Ascending aorta (tissue), 2 donors: ENCODE measurements at regions of chr7 and their contacts with region 1.

Region 1: DNA sequence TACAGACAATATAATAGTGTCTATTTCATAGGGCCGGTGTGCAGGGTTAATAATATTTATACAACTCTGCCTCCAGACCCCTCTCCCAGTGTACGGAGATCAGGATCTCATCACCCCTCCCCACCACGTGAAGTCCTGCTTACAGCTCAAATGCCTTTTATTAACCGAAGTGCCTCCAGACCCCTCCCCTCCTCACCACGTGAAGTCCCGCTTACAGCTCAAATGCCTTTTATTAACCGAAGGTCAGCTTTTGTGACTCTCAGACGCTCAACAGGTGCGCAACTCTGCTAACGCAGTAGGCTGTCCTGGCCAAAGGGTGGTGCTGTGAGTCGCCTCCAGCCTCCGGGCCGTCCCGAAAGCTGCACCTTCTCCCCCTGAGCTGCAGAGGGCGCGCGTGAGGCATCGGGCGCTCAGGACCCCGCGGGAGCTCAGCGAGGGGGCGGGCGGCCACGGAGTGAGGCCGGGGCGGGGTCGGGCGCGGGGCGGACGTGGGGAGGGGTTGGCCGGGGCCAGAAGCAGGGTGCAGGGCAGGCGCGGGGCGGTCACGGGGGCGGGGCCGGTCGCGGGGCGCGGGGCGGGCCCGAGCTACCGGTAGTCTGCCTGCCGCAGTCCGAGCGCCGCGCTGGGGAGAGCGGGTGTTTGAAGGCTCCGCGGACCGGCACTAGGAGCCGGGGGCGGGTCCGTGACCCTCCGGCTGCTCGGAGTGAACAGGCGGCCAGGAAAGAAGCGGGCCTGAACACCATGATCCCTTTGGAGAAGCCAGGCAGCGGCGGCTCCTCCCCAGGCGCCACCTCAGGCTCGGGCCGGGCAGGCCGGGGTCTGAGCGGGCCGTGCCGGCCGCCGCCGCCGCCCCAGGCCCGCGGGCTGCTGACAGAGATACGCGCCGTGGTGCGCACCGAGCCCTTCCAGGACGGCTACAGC is at the start of gene STK17A:
- DNase-seq: peak; percentile 74 to 96
- H3K4me3 ChIP-seq: peak within 1 kb of the TSS; percentile 83 to 89
- H3K27ac ChIP-seq: peak within 1 kb of the TSS; percentile 92 to 98
- H3K4me1 ChIP-seq: peaks cover 0 to 10% of the 10 kb centered on the region in 2 donors
- H3K27me3 ChIP-seq: no peaks in the 10 kb centered on the region
- CTCF ChIP-seq: peak; percentile 100
- total RNA-seq, gene STK17A: 9.6 TPM

Region 2: GRCh38 chr7:42931834-42932651 is 650.7 kb before region 1 on chr7 and contains the starts of genes MRPL32 and PSMA2:
- intact Hi-C with region 1: loop called (anchors 10 kb)
- DNase-seq: peak; percentile 87 to 98
- H3K4me3 ChIP-seq: peak within 1 kb of the TSS; percentile 89 to 94
- H3K27ac ChIP-seq: peak within 1 kb of the TSS; percentile 78 to 87
- H3K4me1 ChIP-seq: peaks cover 4 to 25% of the 10 kb centered on the region in 2 donors
- H3K27me3 ChIP-seq: no peaks in the 10 kb centered on the region
- CTCF ChIP-seq: no peak
- total RNA-seq, gene MRPL32: 24.3 TPM
- total RNA-seq, gene PSMA2: 61.4 TPM

Region 3: GRCh38 chr7:43479042-43479441 is 103.7 kb before region 1 on chr7:
- intact Hi-C with region 1: no loop called
- DNase-seq: no peak
- H3K4me3 ChIP-seq: no peak overlapping the region
- H3K27ac ChIP-seq: no peak overlapping the region
- H3K4me1 ChIP-seq: no peaks in the 10 kb centered on the region
- H3K27me3 ChIP-seq: no peaks in the 10 kb centered on the region
- CTCF ChIP-seq: no peak

Region 4: GRCh38 chr7:43674584-43675436 is 92.0 kb after region 1 on chr7:
- intact Hi-C with region 1: loop called (anchors 1 kb)
- DNase-seq: no peak
- H3K4me3 ChIP-seq: no peak overlapping the region
- H3K27ac ChIP-seq: peak overlapping the region; percentile 8 to 49
- H3K4me1 ChIP-seq: peaks cover 0 to 5% of the 10 kb centered on the region in 2 donors
- H3K27me3 ChIP-seq: no peaks in the 10 kb centered on the region
- CTCF ChIP-seq: no peak

Region 5: GRCh38 chr7:43721193-43721806 is 138.5 kb after region 1 on chr7:
- intact Hi-C with region 1: loop called (anchors 1 kb)
- DNase-seq: no peak
- H3K4me3 ChIP-seq: no peak overlapping the region
- H3K27ac ChIP-seq: no peak overlapping the region
- H3K4me1 ChIP-seq: no peaks in the 10 kb centered on the region
- H3K27me3 ChIP-seq: no peaks in the 10 kb centered on the region
- CTCF ChIP-seq: peak; percentile 56 to 75 (median 66)

Region 6: GRCh38 chr7:43925984-43926797 is 343.4 kb after region 1 on chr7 and contains the start of gene UBE2D4:
- intact Hi-C with region 1: loop called (anchors 1 kb)
- DNase-seq: peak; percentile 56 to 92
- H3K4me3 ChIP-seq: peak within 1 kb of the TSS; percentile 82 to 86
- H3K27ac ChIP-seq: peak within 1 kb of the TSS; percentile 96
- H3K4me1 ChIP-seq: peaks cover 0 to 7% of the 10 kb centered on the region in 2 donors
- H3K27me3 ChIP-seq: no peaks in the 10 kb centered on the region
- CTCF ChIP-seq: no peak
- total RNA-seq, gene UBE2D4: 13.1 TPM